ENCODE measurements at regions of chr3 and their contacts with region 1.

Region 1: GRCh38 chr3:75814797-75815196 is 29.4 kb upstream of the ZNF717 start:
- DNase-seq: no peak
- H3K4me3 ChIP-seq: no peak overlapping the region
- H3K4me3 Mint-ChIP-seq: no peak overlapping the region
- H3K27ac Mint-ChIP-seq: no peak overlapping the region
- H3K4me1 ChIP-seq: no peaks in the 10 kb centered on the region
- H3K4me1 Mint-ChIP-seq: no peaks in the 10 kb centered on the region
- H3K27me3 ChIP-seq: no peaks in the 10 kb centered on the region
- H3K27me3 Mint-ChIP-seq: no peaks in the 10 kb centered on the region
- CTCF ChIP-seq: no peak

Region 2: GRCh38 chr3:75631541-75631940 is 183.3 kb before region 1 on chr3:
- CTCF ChIA-PET with region 1: no interaction called
- POLR2A ChIA-PET with region 1: no interaction called
- intact Hi-C with region 1: no loop called
- DNase-seq: no peak
- H3K4me3 ChIP-seq: no peak overlapping the region
- H3K4me3 Mint-ChIP-seq: no peak overlapping the region
- H3K27ac Mint-ChIP-seq: no peak overlapping the region
- H3K4me1 ChIP-seq: no peaks in the 10 kb centered on the region
- H3K4me1 Mint-ChIP-seq: no peaks in the 10 kb centered on the region
- H3K27me3 ChIP-seq: no peaks in the 10 kb centered on the region
- H3K27me3 Mint-ChIP-seq: no peaks in the 10 kb centered on the region
- CTCF ChIP-seq: no peak

Region 3: DNA sequence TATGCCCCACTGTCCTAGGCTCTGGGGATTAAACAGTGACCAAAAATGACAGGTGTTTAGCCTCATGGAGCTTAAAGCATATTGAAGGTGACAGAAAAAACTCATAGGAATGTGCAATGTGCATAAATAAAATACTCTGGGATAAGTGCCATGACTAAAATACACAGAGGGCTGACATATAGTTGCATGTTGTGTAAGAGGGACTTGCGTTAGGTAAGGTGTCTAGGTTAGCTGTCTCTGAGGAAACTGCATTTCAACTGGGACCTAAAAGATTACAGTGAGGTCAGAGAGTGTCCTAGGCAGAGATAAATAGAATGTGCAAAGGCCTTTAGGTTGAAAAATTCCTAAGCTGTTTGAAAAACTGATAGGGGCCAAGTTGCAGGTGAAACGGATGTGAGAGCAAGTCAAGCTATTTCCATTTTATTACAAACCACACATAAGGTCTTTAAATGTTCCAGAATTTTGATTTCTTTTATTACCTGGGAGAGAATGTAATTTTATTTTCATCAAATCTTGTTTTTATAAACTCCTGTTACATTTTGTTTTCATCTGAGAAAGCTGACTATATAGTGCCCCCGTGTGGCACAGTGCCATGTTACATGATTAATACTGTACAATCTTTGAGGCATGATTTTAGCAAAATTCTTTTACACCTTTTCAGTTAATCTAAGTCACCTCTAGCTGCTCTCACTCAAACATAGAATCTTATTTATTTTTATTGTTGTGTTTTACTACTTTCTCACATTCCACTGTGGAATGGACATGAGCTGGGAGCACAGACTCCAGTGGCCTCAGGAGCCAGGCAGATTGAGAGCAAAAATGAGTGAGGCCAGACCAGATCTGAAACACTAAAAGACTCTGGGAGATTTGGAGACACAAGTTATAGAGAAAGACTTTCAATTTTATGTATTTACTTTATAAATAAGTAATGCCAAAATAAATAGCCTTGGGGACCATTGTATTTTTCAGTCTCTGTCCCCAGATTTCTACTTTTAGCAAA is 230.1 kb after region 1 on chr3:
- CTCF ChIA-PET with region 1: no interaction called
- POLR2A ChIA-PET with region 1: no interaction called
- intact Hi-C with region 1: loop called (anchors 2 kb)
- DNase-seq: peak in 1 of 2 experiments; percentile 27
- H3K4me3 ChIP-seq: no peak overlapping the region
- H3K4me3 Mint-ChIP-seq: no peak overlapping the region
- H3K27ac Mint-ChIP-seq: no peak overlapping the region
- H3K4me1 ChIP-seq: peaks cover 7% of the 10 kb centered on the region; the same call in 1 of the 2 replicates
- H3K4me1 Mint-ChIP-seq: peaks cover 6% of the 10 kb centered on the region
- H3K27me3 ChIP-seq: no peaks in the 10 kb centered on the region
- H3K27me3 Mint-ChIP-seq: no peaks in the 10 kb centered on the region
- CTCF ChIP-seq: peak in 1 of 2 experiments; percentile 47

Region 4: GRCh38 chr3:76107935-76108570 is 293.3 kb after region 1 on chr3:
- CTCF ChIA-PET with region 1: no interaction called
- POLR2A ChIA-PET with region 1: no interaction called
- intact Hi-C with region 1: loop called (anchors 2 kb)
- DNase-seq: peak in 1 of 2 experiments; percentile 21
- H3K4me3 ChIP-seq: no peak overlapping the region
- H3K4me3 Mint-ChIP-seq: no peak overlapping the region
- H3K27ac Mint-ChIP-seq: no peak overlapping the region
- H3K4me1 ChIP-seq: no peaks in the 10 kb centered on the region
- H3K4me1 Mint-ChIP-seq: no peaks in the 10 kb centered on the region
- H3K27me3 ChIP-seq: no peaks in the 10 kb centered on the region
- H3K27me3 Mint-ChIP-seq: no peaks in the 10 kb centered on the region
- CTCF ChIP-seq: peak; percentile 47 to 63

Region 5: GRCh38 chr3:76585794-76586392 is 771.1 kb after region 1 on chr3:
- CTCF ChIA-PET with region 1: no interaction called
- POLR2A ChIA-PET with region 1: no interaction called
- intact Hi-C with region 1: loop called (anchors 10 kb)
- DNase-seq: peak in 1 of 2 experiments; percentile 14
- H3K4me3 ChIP-seq: no peak overlapping the region
- H3K4me3 Mint-ChIP-seq: no peak overlapping the region
- H3K27ac Mint-ChIP-seq: no peak overlapping the region
- H3K4me1 ChIP-seq: no peaks in the 10 kb centered on the region
- H3K4me1 Mint-ChIP-seq: no peaks in the 10 kb centered on the region
- H3K27me3 ChIP-seq: no peaks in the 10 kb centered on the region
- H3K27me3 Mint-ChIP-seq: peaks cover 3% of the 10 kb centered on the region
- CTCF ChIP-seq: peak; percentile 20 to 62